ENCODE measurements at regions of chr6 and their contacts with region 1.

Region 1: GRCh38 chr6:45714741-45715507 is 300.7 kb downstream of the CLIC5 start:
- DNase-seq: peak; percentile 62
- H3K4me3 Mint-ChIP-seq: no peak overlapping the region
- H3K27ac Mint-ChIP-seq: peak overlapping the region; percentile 93
- H3K4me1 Mint-ChIP-seq: peaks cover 73% of the 10 kb centered on the region
- H3K27me3 Mint-ChIP-seq: no peaks in the 10 kb centered on the region

Region 2: GRCh38 chr6:44593539-44593944 is 1121.4 kb before region 1 on chr6:
- CTCF ChIA-PET with region 1: interaction called, 11 read pairs
- POLR2A ChIA-PET with region 1: no interaction called
- intact Hi-C with region 1: no loop called
- DNase-seq: peak; percentile 71
- H3K4me3 Mint-ChIP-seq: no peak overlapping the region
- H3K27ac Mint-ChIP-seq: no peak overlapping the region
- H3K4me1 Mint-ChIP-seq: peaks cover 4% of the 10 kb centered on the region
- H3K27me3 Mint-ChIP-seq: peaks cover 10% of the 10 kb centered on the region

Region 3: DNA sequence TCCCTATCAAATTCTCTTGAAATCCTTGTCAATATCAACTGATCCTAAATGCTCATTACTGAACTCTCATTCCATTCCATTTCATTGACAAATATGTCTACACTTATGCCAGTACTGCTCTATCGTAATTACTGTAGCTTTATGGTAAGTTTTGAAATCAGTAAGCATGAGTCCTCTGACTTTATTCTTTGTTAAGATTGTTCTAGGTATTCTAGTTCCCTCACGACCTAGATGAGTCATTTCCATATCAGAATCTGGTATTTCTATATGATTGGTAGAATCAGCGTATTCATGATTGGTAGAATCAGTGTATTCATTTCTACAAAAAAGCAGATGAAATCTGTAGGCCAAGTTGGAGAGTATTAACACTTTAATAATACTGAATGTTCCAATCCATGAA is 705.3 kb before region 1 on chr6:
- CTCF ChIA-PET with region 1: no interaction called
- POLR2A ChIA-PET with region 1: no interaction called
- intact Hi-C with region 1: loop called (anchors 1 kb)
- DNase-seq: no peak
- H3K4me3 Mint-ChIP-seq: no peak overlapping the region
- H3K27ac Mint-ChIP-seq: peak overlapping the region; percentile 66
- H3K4me1 Mint-ChIP-seq: peaks cover 25% of the 10 kb centered on the region
- H3K27me3 Mint-ChIP-seq: no peaks in the 10 kb centered on the region

Region 4: DNA sequence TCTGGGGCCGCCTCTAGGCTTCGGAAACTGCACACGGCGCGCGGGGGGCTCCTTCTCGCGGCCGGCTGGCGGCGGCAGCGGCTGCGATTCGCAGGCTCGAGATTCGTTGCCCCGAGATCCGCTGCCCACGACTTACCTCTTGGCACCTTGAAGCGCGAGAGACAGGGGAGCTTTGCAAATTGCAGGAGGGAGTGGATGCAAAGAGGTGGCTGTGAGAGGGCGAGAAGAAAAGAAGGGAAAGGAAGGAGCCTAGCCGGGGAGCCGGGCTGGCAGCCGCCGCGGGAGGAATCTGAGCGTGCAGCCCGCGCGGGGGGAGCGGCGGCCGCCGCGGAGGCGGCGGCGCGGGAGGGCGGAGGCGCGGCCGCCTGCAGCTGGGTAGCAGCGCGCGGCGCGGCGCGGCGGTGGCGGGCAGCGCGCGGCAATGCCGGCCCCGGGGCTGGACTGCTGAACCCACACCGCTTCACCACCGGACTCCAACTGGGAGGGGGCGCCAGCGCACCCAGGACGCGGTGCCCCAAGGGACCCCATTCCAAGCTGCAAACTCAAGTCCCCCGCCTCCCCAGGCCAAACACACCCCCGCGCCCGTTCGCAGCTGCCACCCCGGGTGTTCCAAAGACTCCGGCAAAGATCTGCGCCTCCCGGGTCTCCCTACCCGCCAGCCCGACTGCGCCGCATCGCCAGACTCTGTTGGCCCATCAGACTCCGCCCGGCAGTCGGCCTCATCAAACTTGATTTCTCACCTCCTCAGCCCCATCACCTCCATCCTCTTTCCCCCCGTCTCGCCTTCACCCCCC is 293.0 kb before region 1 on chr6:
- CTCF ChIA-PET with region 1: interaction called, 13 read pairs
- POLR2A ChIA-PET with region 1: interaction called, 7 read pairs
- intact Hi-C with region 1: loop called (anchors 1 kb)
- DNase-seq: peak; percentile 78
- H3K4me3 Mint-ChIP-seq: peak overlapping the region; percentile 91
- H3K27ac Mint-ChIP-seq: peak overlapping the region; percentile 97
- H3K4me1 Mint-ChIP-seq: peaks cover 41% of the 10 kb centered on the region
- H3K27me3 Mint-ChIP-seq: no peaks in the 10 kb centered on the region

Region 5: DNA sequence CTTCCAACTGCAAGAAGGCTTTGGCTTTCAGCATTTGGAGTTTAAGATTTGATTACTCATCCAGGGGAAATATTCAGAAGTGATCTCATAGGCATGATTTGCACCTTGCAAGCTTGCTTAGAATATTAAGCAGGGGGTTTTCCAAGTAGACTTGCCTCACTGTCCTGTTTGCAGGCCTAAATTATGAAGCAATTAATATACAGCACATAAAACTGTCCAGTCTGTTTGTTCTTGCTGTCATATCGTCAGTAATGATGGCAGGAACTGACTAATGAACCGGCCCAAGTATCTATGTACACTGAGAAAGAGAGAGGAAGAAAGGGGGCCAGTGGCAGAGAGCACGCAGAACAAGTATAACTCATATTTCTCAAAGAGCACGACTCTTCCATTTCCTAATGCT is 124.7 kb before region 1 on chr6:
- CTCF ChIA-PET with region 1: interaction called, 3 read pairs
- POLR2A ChIA-PET with region 1: interaction called, 5 read pairs
- intact Hi-C with region 1: loop called (anchors 1 kb)
- DNase-seq: no peak
- H3K4me3 Mint-ChIP-seq: no peak overlapping the region
- H3K27ac Mint-ChIP-seq: peak overlapping the region; percentile 53
- H3K4me1 Mint-ChIP-seq: peaks cover 94% of the 10 kb centered on the region
- H3K27me3 Mint-ChIP-seq: no peaks in the 10 kb centered on the region

Region 6: GRCh38 chr6:45640081-45640491 is 74.8 kb before region 1 on chr6:
- CTCF ChIA-PET with region 1: no interaction called
- POLR2A ChIA-PET with region 1: no interaction called
- intact Hi-C with region 1: no loop called
- DNase-seq: no peak
- H3K4me3 Mint-ChIP-seq: no peak overlapping the region
- H3K27ac Mint-ChIP-seq: no peak overlapping the region
- H3K4me1 Mint-ChIP-seq: peaks cover 6% of the 10 kb centered on the region
- H3K27me3 Mint-ChIP-seq: no peaks in the 10 kb centered on the region

Region 7: GRCh38 chr6:45657226-45657625 is 57.7 kb before region 1 on chr6:
- CTCF ChIA-PET with region 1: no interaction called
- POLR2A ChIA-PET with region 1: no interaction called
- intact Hi-C with region 1: no loop called
- DNase-seq: no peak
- H3K4me3 Mint-ChIP-seq: no peak overlapping the region
- H3K27ac Mint-ChIP-seq: no peak overlapping the region
- H3K4me1 Mint-ChIP-seq: peaks cover 27% of the 10 kb centered on the region
- H3K27me3 Mint-ChIP-seq: peaks cover 3% of the 10 kb centered on the region

Region 8: GRCh38 chr6:45677381-45678284 is 37.3 kb before region 1 on chr6:
- CTCF ChIA-PET with region 1: interaction called, 4 read pairs
- POLR2A ChIA-PET with region 1: interaction called, 3 read pairs
- intact Hi-C with region 1: loop called (anchors 1 kb)
- DNase-seq: peak; percentile 77
- H3K4me3 Mint-ChIP-seq: peak overlapping the region; percentile 60
- H3K27ac Mint-ChIP-seq: peak overlapping the region; percentile 85
- H3K4me1 Mint-ChIP-seq: peaks cover 41% of the 10 kb centered on the region
- H3K27me3 Mint-ChIP-seq: no peaks in the 10 kb centered on the region

Region 9: DNA sequence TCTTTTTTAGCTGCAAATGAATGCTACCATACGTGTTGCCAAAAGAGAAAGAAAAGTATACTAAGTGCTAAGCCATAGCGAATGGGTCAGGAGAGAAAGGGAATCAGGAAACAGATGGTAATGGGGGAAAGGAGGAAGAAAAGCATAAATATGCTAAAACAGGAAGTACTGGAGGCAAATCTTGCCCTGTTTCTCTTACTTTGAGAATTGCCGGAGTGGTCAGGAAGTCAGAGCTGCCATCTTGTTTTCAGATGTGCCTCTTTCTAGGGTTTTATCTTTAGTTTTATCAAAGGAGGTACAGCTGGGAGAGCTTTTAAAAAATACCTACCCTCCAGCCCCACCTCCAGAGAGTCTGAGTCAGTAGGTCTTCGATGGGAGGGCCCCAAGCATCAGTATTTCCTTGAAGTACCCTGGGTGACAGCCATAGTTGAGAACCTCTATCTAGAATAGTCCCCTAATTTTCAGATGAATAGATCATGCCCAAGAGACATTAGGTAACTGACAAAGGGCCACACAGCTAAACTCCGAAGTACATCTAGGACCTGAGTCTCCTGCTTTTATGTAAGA is 107.4 kb after region 1 on chr6:
- CTCF ChIA-PET with region 1: no interaction called
- POLR2A ChIA-PET with region 1: interaction called, 3 read pairs
- intact Hi-C with region 1: loop called (anchors 2 kb)
- DNase-seq: peak; percentile 67
- H3K4me3 Mint-ChIP-seq: peak overlapping the region; percentile 47
- H3K27ac Mint-ChIP-seq: peak overlapping the region; percentile 89
- H3K4me1 Mint-ChIP-seq: peaks cover 50% of the 10 kb centered on the region
- H3K27me3 Mint-ChIP-seq: peaks cover 3% of the 10 kb centered on the region

Measured in activated CD4-positive, alpha-beta memory T cell treated with anti-CD3 and anti-CD28 coated beads for 36 hours (primary cell).